CD4-positive, alpha-beta T cell (primary cell): ENCODE measurements at regions of chr1 and their contacts with region 1.

Region 1: DNA sequence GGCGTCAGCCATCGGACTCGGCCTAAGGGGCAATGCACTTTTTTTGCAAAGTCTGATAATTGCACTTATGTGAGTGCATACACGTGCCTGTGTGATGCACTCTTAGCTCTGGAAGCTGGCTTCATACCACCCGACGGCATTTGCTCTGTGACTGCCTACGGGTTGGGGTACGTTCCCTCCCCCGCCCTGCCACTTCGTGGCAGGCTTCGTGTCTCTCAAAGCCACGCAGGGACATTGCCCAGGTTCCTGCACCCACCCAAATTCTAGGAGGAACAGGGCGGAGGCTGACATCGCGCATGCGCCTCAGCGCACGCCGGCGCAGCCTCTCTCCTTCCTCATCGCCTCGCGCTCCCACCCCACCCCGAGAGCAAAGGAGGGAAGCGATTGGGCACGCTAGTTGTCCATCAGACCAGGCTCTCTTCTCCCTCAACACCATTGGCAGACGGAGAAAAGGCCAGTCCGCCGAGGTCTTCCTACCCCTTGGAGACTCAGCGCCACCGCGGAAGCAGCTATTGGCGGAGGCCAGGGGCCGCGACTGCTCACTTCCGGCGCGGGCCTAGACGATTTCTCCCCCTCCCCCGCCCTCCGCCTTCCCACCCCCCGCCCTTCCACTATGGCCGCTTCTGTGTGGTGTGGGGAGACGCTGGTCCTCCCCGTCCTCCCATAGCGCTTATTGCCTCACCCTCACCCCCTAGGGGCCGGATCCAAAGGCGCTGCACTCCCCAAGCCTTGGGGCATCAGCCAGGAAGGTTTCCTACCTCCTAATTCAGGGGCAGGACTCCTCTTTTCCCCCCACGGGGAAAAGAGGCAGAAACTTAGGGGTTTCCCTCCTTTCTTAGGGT is at the start of gene INTS3:
- DNase-seq: peak; percentile 95 to 100 (median 99)
- ATAC-seq: peak; percentile 99
- H3K4me3 ChIP-seq: peak within 1 kb of the TSS; percentile 71
- H3K4me3 Mint-ChIP-seq: peak within 1 kb of the TSS; percentile 95
- H3K27ac ChIP-seq: peak within 1 kb of the TSS; percentile 91 to 94
- H3K27ac Mint-ChIP-seq: peak within 1 kb of the TSS; percentile 84
- H3K4me1 ChIP-seq: peaks cover 23% of the 10 kb centered on the region
- H3K4me1 Mint-ChIP-seq: peaks cover 29% of the 10 kb centered on the region
- H3K27me3 ChIP-seq: no peaks in the 10 kb centered on the region
- H3K27me3 Mint-ChIP-seq: no peaks in the 10 kb centered on the region
- CTCF ChIP-seq: no peak
- total RNA-seq, gene INTS3: 24.9 to 27.4 TPM

Region 2: GRCh38 chr1:153658400-153659174 is 69.1 kb before region 1 on chr1 and contains the start of gene SNAPIN:
- CTCF ChIA-PET with region 1: no interaction called
- POLR2A ChIA-PET with region 1: no interaction called
- intact Hi-C with region 1: loop called in 1 of 2 experiments (anchors 5 kb)
- DNase-seq: peak; percentile 78 to 93 (median 87)
- ATAC-seq: peak; percentile 96
- H3K4me3 ChIP-seq: peak within 1 kb of the TSS; percentile 79
- H3K4me3 Mint-ChIP-seq: peak within 1 kb of the TSS; percentile 97
- H3K27ac ChIP-seq: peak within 1 kb of the TSS; percentile 76 to 84
- H3K27ac Mint-ChIP-seq: peak within 1 kb of the TSS; percentile 94
- H3K4me1 ChIP-seq: peaks cover 22% of the 10 kb centered on the region
- H3K4me1 Mint-ChIP-seq: peaks cover 16% of the 10 kb centered on the region
- H3K27me3 ChIP-seq: no peaks in the 10 kb centered on the region
- H3K27me3 Mint-ChIP-seq: no peaks in the 10 kb centered on the region
- CTCF ChIP-seq: no peak
- total RNA-seq, gene SNAPIN: 7.2 to 7.3 TPM

Region 3: GRCh38 chr1:153775458-153776327 is 48.0 kb after region 1 on chr1:
- CTCF ChIA-PET with region 1: no interaction called
- POLR2A ChIA-PET with region 1: interaction called, 11 read pairs
- intact Hi-C with region 1: no loop called
- DNase-seq: peak; percentile 42 to 81 (median 64)
- ATAC-seq: peak; percentile 80
- H3K4me3 ChIP-seq: peak overlapping the region; percentile 72
- H3K4me3 Mint-ChIP-seq: peak overlapping the region; percentile 86
- H3K27ac ChIP-seq: peak overlapping the region in 1 of 2 donors; percentile 41
- H3K27ac Mint-ChIP-seq: peak overlapping the region; percentile 51
- H3K4me1 ChIP-seq: peaks cover 25% of the 10 kb centered on the region
- H3K4me1 Mint-ChIP-seq: peaks cover 16% of the 10 kb centered on the region
- H3K27me3 ChIP-seq: no peaks in the 10 kb centered on the region
- H3K27me3 Mint-ChIP-seq: no peaks in the 10 kb centered on the region
- CTCF ChIP-seq: no peak